Posterior cingulate gyrus (tissue), 11 donors: ENCODE measurements at regions of chr2 and their contacts with region 1.

Region 1: GRCh38 chr2:41966431-41966893 is 81.4 kb upstream of the PKDCC start:
- DNase-seq: peak; percentile 65 to 97 (median 83)

Region 2: GRCh38 chr2:41750829-41751228 is 215.6 kb before region 1 on chr2:
- intact Hi-C with region 1: no loop called
- DNase-seq: no peak

Region 3: GRCh38 chr2:42047488-42048298 is 81.2 kb after region 1 on chr2 and contains the start of gene PKDCC:
- intact Hi-C with region 1: loop called (anchors 10 kb)
- DNase-seq: peak in 8 of 10 donors; percentile 53 to 96 (median 80)